Endothelial cell of umbilical vein (primary cell): ENCODE measurements at regions of chr7 and their contacts with region 1.

Region 1: DNA sequence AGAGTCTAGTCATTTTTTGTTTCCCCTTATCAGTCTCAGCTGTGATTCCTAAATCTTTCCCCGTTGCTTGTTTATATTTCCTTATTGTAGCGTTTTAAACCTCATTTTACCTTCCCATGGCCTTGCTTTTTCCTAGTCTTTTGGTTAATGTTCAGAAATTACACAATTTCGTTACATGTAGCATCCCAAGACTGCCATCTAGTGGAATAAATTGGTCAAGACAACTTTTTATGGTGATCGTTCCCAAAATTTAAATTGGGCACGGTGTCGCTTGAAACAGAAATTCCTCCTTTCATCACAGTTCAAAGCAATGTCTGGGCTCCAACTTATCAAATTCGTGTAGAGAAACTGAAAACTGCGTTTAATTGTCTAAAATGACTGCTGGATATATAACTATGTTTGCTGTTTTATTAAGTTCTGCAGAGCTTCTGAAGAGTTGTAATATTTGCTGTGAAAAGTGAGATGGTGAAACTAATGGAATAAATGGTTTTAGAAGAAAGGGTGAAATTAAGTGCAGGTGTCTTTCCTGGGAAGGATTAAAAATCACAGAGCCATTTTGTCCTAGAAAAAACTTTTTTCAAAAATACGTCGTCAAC is 370.2 kb downstream of the PHF14 start:
- DNase-seq: peak; percentile 60
- H3K4me3 ChIP-seq: no peak overlapping the region
- H3K27ac ChIP-seq: no peak overlapping the region
- H3K4me1 ChIP-seq: no peaks in the 10 kb centered on the region
- H3K27me3 ChIP-seq: peaks cover 0 to 2% of the 10 kb centered on the region in 2 experiments
- CTCF ChIP-seq: peak; percentile 45 to 50
- POLR2A ChIP-seq: no peak

Region 2: GRCh38 chr7:10022957-10023356 is 1321.0 kb before region 1 on chr7:
- CTCF ChIA-PET with region 1: no interaction called
- POLR2A ChIA-PET with region 1: no interaction called
- dilution Hi-C with region 1: no loop called
- intact Hi-C with region 1: loop called (anchors 5 kb)
- DNase-seq: peak; percentile 59
- H3K4me3 ChIP-seq: no peak overlapping the region
- H3K27ac ChIP-seq: no peak overlapping the region
- H3K4me1 ChIP-seq: no peaks in the 10 kb centered on the region
- H3K27me3 ChIP-seq: no peaks in the 10 kb centered on the region
- CTCF ChIP-seq: peak; percentile 25 to 52
- POLR2A ChIP-seq: no peak

Region 3: DNA sequence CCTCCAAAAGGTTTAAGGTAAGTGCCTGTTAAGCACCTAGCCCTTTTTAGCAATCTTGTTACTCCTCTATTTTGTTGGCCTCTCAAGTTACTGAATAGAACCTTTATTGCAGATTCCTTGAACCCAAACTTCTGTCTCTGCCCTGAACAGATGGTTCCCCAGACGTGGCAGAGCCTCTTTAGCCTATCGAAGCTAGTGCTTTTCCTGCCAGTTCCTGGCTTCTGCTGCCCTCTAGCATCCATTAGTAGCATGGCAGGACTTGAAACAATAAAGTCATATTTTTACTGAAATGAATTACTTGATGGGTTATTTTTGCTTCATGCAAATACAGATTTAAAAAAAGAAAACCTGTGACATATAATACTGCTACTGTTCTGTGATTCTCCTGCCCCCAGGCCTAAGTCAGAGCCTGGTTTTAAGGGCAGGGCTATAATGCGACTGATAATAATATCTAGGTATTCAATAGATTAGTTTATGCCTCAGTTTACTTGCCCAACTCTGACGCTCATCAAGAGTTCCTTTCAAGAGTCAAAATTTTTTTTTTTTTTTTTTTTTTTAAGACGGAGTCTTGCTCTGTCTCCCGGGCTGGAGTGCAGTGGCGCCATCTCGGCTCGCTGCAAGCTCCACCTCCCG is 454.5 kb before region 1 on chr7:
- CTCF ChIA-PET with region 1: interaction called, 3 read pairs
- POLR2A ChIA-PET with region 1: no interaction called
- dilution Hi-C with region 1: no loop called
- intact Hi-C with region 1: loop called (anchors 5 kb)
- DNase-seq: peak; percentile 48
- H3K4me3 ChIP-seq: no peak overlapping the region
- H3K27ac ChIP-seq: no peak overlapping the region
- H3K4me1 ChIP-seq: no peaks in the 10 kb centered on the region
- H3K27me3 ChIP-seq: no peaks in the 10 kb centered on the region
- CTCF ChIP-seq: peak; percentile 71
- POLR2A ChIP-seq: no peak

Region 4: DNA sequence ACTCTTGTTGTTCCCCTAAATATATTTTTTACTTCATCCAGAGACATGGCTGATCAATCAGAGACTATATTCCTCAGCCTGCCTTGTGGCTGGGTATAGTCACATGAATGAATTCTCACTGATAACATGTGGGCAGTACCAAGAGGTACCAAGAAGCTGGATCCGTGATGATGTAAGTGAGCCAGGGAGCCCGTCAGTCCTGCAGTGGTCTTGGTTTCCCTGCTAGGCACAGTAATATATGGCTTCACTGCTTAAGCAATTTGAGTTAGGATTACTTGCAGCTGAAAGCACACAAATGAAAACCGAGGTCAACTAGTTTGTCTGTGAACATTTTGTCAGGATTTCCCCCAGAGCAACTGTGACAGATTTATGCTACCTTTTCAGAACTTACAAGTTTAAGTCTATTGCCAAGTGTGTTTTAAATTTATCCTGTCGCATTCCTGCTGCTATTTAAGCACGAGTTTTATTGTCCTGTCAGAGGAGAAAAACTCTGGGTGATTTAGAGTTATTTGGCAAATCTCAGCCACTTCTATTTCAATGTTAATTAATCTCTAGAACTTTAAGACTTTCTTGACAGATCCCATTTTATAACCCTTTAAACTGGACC is 11.6 kb after region 1 on chr7:
- CTCF ChIA-PET with region 1: interaction called, 13 read pairs
- POLR2A ChIA-PET with region 1: no interaction called
- dilution Hi-C with region 1: no loop called
- intact Hi-C with region 1: no loop called
- DNase-seq: no peak
- H3K4me3 ChIP-seq: no peak overlapping the region
- H3K27ac ChIP-seq: no peak overlapping the region
- H3K4me1 ChIP-seq: no peaks in the 10 kb centered on the region
- H3K27me3 ChIP-seq: peaks cover 0 to 5% of the 10 kb centered on the region in 2 experiments
- CTCF ChIP-seq: no peak
- POLR2A ChIP-seq: no peak